PC-9 (cell line): ENCODE measurements at regions of chr5 and their contacts with region 1.

Region 1: DNA sequence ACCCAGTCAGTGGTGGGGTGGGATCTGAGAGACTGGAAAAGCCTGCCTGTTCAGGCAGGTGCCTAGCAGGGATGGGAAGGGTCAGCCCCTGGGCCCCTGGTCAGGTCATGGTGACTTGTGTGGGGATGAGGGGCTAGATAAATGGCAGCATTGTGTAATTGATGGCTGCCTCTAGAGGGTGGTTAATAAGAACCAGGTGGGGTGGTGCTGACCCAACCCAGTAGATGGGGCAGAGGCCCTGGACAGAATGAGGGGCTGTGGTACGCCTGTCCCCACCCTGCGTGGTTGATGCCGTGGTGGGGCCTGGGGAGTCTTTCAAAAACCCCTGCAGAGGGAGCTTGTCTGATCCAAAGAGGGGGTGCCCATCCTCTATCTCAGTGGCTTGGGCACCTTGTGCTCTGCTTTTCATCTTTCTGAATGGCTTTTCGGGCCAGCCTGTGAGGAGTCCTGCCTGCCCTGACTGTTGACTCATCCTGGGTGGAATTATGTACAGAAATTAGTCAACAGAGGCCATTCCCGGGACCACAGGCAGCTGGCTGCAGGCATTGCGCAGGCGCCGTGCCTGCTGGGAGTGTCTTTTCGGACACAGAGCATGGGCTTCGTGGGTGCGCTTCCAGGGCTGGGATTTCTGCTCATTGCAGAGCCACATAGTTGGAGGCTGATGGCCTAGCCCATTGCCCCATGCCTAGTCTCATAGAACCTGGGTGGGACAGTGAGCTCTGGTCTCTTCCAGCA is 93.6 kb upstream of the PITX1 start:
- DNase-seq: peak; percentile 83 to 92
- H3K4me3 ChIP-seq: no peak overlapping the region
- H3K27ac ChIP-seq: peak overlapping the region; percentile 78
- H3K4me1 ChIP-seq: peaks cover 52% of the 10 kb centered on the region
- H3K27me3 ChIP-seq: no peaks in the 10 kb centered on the region
- CTCF ChIP-seq: no peak

Region 2: GRCh38 chr5:135034236-135034962 is 93.3 kb before region 1 on chr5:
- CTCF ChIA-PET with region 1: no interaction called
- POLR2A ChIA-PET with region 1: no interaction called
- intact Hi-C with region 1: loop called (anchors 2 kb)
- DNase-seq: peak; percentile 62 to 79
- H3K4me3 ChIP-seq: peak overlapping the region; percentile 100
- H3K27ac ChIP-seq: peak overlapping the region; percentile 70
- H3K4me1 ChIP-seq: peaks cover 17% of the 10 kb centered on the region
- H3K27me3 ChIP-seq: no peaks in the 10 kb centered on the region
- CTCF ChIP-seq: no peak

Region 3: GRCh38 chr5:135085127-135085935 is 42.3 kb before region 1 on chr5:
- CTCF ChIA-PET with region 1: no interaction called
- POLR2A ChIA-PET with region 1: interaction called, 6 read pairs
- intact Hi-C with region 1: loop called (anchors 1 kb)
- DNase-seq: peak; percentile 75 to 94
- H3K4me3 ChIP-seq: peak overlapping the region; percentile 42; the same call in 1 of the 2 replicates
- H3K27ac ChIP-seq: peak overlapping the region; percentile 97
- H3K4me1 ChIP-seq: peaks cover 48% of the 10 kb centered on the region
- H3K27me3 ChIP-seq: no peaks in the 10 kb centered on the region
- CTCF ChIP-seq: 0 out of 2 replicates have a peak, but pooled peaks have one; percentile 33

Region 4: GRCh38 chr5:135106610-135107471 is 20.8 kb before region 1 on chr5:
- CTCF ChIA-PET with region 1: no interaction called
- POLR2A ChIA-PET with region 1: interaction called, 4 read pairs
- intact Hi-C with region 1: loop called (anchors 2 kb)
- DNase-seq: no peak
- H3K4me3 ChIP-seq: no peak overlapping the region
- H3K27ac ChIP-seq: no peak overlapping the region
- H3K4me1 ChIP-seq: peaks cover 16% of the 10 kb centered on the region
- H3K27me3 ChIP-seq: no peaks in the 10 kb centered on the region
- CTCF ChIP-seq: no peak

Region 5: DNA sequence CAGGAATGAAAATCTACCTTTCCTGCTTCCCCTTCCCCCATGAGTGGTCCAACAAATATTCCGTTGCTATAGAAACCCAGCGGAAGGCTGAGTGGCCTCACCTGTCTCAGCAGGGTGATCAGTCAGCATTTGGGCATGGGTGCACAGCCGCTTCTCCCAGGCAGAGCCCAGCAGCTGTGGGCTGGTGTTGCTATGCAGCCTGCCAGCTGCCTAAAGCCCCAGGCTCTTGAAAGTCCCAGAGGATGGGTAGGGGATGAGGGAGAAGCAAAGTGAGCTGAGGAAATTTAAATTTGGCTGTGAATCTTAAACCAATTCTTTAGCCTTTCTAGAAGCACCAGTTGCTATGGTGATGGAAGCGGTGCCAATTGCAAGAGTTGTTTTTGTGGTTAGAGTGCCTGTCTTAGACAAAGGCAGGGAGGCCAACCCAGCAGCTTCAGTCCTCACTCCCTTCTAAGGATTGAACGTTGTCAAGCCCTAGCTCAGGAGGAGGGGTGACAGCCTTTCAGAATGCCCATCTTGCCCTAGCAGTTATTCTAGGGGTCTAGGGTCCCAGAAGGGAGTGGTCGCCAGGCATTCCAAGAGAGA is 57.9 kb after region 1 on chr5:
- CTCF ChIA-PET with region 1: no interaction called
- POLR2A ChIA-PET with region 1: no interaction called
- intact Hi-C with region 1: loop called (anchors 1 kb)
- DNase-seq: no peak
- H3K4me3 ChIP-seq: no peak overlapping the region
- H3K27ac ChIP-seq: no peak overlapping the region; the same call in 1 of the 2 replicates
- H3K4me1 ChIP-seq: peaks cover 26% of the 10 kb centered on the region
- H3K27me3 ChIP-seq: no peaks in the 10 kb centered on the region
- CTCF ChIP-seq: no peak